Panc1 (cell line): ENCODE measurements at regions of chr18 and their contacts with region 1.

Region 1: DNA sequence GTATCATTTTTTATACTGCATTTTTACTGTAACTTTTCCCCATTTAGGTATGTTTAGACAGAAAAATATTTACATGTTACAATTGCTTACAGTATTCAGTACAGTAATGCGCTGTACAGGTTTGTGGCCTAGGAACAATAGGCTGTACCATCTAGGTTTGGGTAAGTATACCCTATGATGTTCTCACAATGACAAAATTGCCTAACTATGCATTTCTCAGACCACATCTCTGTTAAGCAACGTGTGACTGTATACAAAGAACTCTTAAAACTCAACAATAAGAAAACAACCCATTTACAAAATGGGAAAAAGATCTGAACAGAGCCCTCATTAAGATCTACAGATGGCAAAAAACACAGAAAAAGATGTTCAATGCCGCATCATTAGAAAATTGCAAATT is 29.4 kb downstream of the FAM210A start:
- DNase-seq: no peak
- ATAC-seq: no peak
- H3K4me3 ChIP-seq: no peak overlapping the region
- H3K27ac ChIP-seq: no peak overlapping the region
- H3K4me1 ChIP-seq: no peaks in the 10 kb centered on the region
- H3K27me3 ChIP-seq: no peaks in the 10 kb centered on the region
- CTCF ChIP-seq: no peak

Region 2: GRCh38 chr18:13800505-13801259 is 103.7 kb after region 1 on chr18:
- CTCF ChIA-PET with region 1: interaction called, 10 read pairs
- POLR2A ChIA-PET with region 1: no interaction called
- in situ Hi-C with region 1: no loop called
- intact Hi-C with region 1: no loop called
- DNase-seq: no peak
- ATAC-seq: peak; percentile 100
- H3K4me3 ChIP-seq: peak overlapping the region; percentile 28 to 63
- H3K27ac ChIP-seq: no peak overlapping the region
- H3K4me1 ChIP-seq: no peaks in the 10 kb centered on the region; the same call in 1 of the 2 replicates
- H3K27me3 ChIP-seq: peaks cover 2% of the 10 kb centered on the region; the same call in 1 of the 2 replicates
- CTCF ChIP-seq: peak; percentile 88